Activated CD8-positive, alpha-beta T cell treated with anti-CD3 and anti-CD28 coated beads for 36 hours (primary cell): ENCODE measurements at regions of chr2 and their contacts with region 1.

Region 1: GRCh38 chr2:237421542-237422116 is 7.7 kb upstream of the COL6A3 start:
- DNase-seq: peak; percentile 88
- ATAC-seq: peak; percentile 92
- H3K4me3 Mint-ChIP-seq: peak overlapping the region; percentile 43
- H3K27ac Mint-ChIP-seq: peak overlapping the region; percentile 71
- H3K4me1 Mint-ChIP-seq: peaks cover 23% of the 10 kb centered on the region
- H3K27me3 Mint-ChIP-seq: peaks cover 1% of the 10 kb centered on the region
- CTCF ChIP-seq: peak; percentile 78

Region 2: DNA sequence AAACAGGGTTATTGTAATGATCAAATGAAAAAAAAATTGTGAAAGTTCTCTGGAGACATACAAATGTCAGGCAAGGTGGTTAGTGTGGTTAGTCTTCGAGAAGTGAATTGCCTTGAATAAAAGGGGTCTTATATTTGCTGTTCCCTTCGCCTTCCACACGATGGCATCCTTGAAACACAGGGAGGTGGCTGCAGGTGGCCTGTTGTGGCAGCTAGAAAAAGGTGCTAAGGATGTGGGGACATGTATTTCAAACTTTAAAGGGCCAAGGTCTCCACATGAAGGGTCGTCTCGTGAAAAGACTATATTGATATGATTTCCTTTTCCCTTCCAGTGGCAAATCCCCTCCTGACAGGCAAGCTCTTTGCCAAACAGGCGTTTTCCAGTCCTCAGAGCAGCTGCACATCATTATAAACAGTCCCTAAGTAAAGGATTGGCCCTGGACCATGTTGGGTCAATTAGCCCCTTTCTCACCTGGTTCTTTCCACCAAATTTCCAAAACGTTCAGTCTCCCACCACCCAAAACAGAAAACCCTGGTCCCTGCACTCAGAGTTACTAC is 267.5 kb before region 1 on chr2:
- CTCF ChIA-PET with region 1: interaction called, 29 read pairs
- POLR2A ChIA-PET with region 1: interaction called, 3 read pairs
- intact Hi-C with region 1: no loop called
- DNase-seq: peak; percentile 71
- ATAC-seq: peak; percentile 29
- H3K4me3 Mint-ChIP-seq: no peak overlapping the region
- H3K27ac Mint-ChIP-seq: peak overlapping the region; percentile 86
- H3K4me1 Mint-ChIP-seq: peaks cover 52% of the 10 kb centered on the region
- H3K27me3 Mint-ChIP-seq: no peaks in the 10 kb centered on the region
- CTCF ChIP-seq: peak; percentile 81

Region 3: DNA sequence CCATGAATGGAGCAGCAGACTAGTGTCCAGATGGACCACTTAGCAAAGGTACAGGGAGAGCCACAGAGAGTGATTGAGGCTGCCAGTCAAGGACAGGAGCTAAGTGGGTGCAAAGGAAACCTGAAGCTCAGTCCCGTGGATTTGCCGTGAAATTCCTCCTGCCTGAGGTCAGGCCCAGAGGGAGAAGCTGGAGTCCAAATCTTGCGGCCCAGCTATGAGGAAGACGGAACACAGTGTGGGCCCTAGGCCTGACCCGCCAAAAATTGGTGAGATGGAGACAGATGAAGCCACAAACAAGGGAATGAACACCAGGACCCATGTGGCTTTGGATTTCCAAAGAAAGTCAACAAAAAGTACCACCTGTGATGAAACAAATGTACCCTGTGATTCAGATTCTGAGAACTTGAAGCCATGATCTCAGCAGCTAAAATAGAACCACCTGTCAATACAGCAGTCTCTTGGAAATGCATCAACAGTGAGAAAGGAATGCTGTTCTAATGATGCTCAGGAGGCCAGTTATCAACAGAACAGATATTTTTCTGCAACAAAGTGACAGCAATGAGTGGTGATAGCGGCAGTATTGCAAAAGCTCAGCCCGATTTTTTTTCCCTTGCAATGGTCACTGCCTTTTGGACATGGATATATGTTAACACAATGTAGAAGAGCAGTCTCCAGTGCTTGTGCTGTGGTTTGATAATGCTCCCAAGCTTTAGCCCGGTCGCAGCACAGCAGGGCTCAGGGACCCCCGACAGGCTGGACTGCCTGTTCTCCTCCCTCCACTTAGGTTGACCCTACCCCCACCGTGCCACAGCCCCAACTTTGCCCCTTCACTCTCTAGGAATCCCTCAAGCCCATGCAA is 18.4 kb before region 1 on chr2:
- CTCF ChIA-PET with region 1: interaction called, 19 read pairs
- POLR2A ChIA-PET with region 1: no interaction called
- intact Hi-C with region 1: no loop called
- DNase-seq: no peak
- ATAC-seq: no peak
- H3K4me3 Mint-ChIP-seq: no peak overlapping the region
- H3K27ac Mint-ChIP-seq: no peak overlapping the region
- H3K4me1 Mint-ChIP-seq: no peaks in the 10 kb centered on the region
- H3K27me3 Mint-ChIP-seq: no peaks in the 10 kb centered on the region
- CTCF ChIP-seq: no peak

Region 4: GRCh38 chr2:237434866-237435311 is 13.3 kb after region 1 on chr2:
- CTCF ChIA-PET with region 1: interaction called, 39 read pairs
- POLR2A ChIA-PET with region 1: interaction called, 32 read pairs
- intact Hi-C with region 1: no loop called
- DNase-seq: peak; percentile 94
- ATAC-seq: peak; percentile 43
- H3K4me3 Mint-ChIP-seq: peak overlapping the region; percentile 78
- H3K27ac Mint-ChIP-seq: peak overlapping the region; percentile 97
- H3K4me1 Mint-ChIP-seq: peaks cover 86% of the 10 kb centered on the region
- H3K27me3 Mint-ChIP-seq: no peaks in the 10 kb centered on the region
- CTCF ChIP-seq: no peak

Region 5: DNA sequence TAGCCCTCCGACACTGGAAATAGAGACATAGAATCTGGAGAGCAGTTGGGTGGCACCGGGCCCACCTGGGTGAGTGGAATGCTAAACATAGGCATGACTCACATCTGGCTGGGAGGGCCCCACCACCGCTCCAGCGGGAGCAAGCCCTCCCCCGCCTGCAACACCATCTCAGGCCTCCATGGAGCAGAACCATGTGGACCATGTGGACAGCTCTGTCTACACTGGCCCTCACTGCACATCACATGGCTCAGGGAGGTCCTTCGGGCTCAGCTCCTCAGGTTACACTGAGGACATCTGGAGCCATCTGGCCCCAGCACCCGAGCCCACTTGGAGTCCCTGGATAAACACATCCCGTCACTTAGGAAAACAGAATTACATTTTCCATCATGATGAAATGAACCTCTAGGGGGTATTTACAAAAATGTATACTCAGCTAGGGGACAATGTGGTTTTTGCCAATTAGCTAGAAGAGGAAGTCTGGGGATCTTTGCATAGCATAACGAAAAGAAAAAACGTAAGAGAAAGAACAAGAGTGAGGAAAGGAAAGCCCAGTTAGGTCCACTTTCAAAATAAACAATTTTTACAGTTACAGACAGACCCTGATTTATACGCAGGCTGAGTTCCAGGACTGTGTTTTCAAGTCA is 34.7 kb after region 1 on chr2:
- CTCF ChIA-PET with region 1: interaction called, 12 read pairs
- POLR2A ChIA-PET with region 1: no interaction called
- intact Hi-C with region 1: no loop called
- DNase-seq: no peak
- ATAC-seq: no peak
- H3K4me3 Mint-ChIP-seq: no peak overlapping the region
- H3K27ac Mint-ChIP-seq: no peak overlapping the region
- H3K4me1 Mint-ChIP-seq: peaks cover 17% of the 10 kb centered on the region
- H3K27me3 Mint-ChIP-seq: no peaks in the 10 kb centered on the region
- CTCF ChIP-seq: no peak

Region 6: GRCh38 chr2:237512774-237513466 is 91.3 kb after region 1 on chr2:
- CTCF ChIA-PET with region 1: interaction called, 12 read pairs
- POLR2A ChIA-PET with region 1: no interaction called
- intact Hi-C with region 1: no loop called
- DNase-seq: peak; percentile 91
- ATAC-seq: peak; percentile 91
- H3K4me3 Mint-ChIP-seq: no peak overlapping the region
- H3K27ac Mint-ChIP-seq: no peak overlapping the region
- H3K4me1 Mint-ChIP-seq: no peaks in the 10 kb centered on the region
- H3K27me3 Mint-ChIP-seq: no peaks in the 10 kb centered on the region
- CTCF ChIP-seq: peak; percentile 95

Region 7: GRCh38 chr2:237841051-237841450 is 419.4 kb after region 1 on chr2:
- CTCF ChIA-PET with region 1: no interaction called
- POLR2A ChIA-PET with region 1: no interaction called
- intact Hi-C with region 1: no loop called
- DNase-seq: no peak
- ATAC-seq: no peak
- H3K4me3 Mint-ChIP-seq: no peak overlapping the region
- H3K27ac Mint-ChIP-seq: no peak overlapping the region
- H3K4me1 Mint-ChIP-seq: no peaks in the 10 kb centered on the region
- H3K27me3 Mint-ChIP-seq: peaks cover 5% of the 10 kb centered on the region
- CTCF ChIP-seq: no peak